ENCODE measurements at regions of chr9 and their contacts with region 1.

Region 1: DNA sequence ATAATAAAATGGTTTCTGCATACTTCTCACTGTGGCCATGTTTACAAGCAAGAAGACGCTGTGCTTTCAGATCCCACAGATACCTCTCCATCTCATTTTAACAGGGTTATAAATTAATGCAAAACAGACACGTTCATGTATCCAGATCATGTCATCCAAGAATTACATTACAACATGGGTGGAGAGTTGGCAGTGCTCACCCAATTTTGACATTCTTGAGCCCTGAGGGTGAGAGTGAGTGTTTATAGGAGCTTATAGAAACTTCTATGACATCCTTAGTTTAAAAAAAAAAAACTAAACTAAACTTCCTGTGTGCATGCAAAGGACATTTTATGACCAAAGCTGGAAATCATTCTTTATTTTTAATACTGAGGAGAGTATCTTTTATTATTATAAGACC is 9.1 kb downstream of the PRKACG start:
- DNase-seq: no peak
- ATAC-seq: no peak

Region 2: DNA sequence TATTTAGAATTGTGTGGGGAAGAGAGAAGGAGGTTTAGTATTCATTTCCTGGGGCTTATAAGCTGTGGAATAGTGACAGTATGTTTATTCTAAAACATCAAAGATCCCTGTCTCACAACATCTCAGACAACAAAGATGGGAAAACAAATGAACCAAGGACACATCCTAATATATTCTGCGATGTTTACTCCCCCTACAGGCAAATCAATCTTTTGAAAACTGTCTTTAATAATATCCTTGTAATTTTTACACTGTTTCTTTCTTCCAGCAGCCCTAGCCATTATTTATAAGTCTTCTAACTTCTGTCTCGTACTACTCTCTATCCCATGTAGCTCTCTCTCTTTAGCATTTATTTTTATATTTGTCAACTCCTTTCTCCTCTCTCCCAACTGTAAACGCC is 430.7 kb before region 1 on chr9:
- intact Hi-C with region 1: loop called (anchors 5 kb)
- DNase-seq: no peak
- ATAC-seq: no peak

Region 3: DNA sequence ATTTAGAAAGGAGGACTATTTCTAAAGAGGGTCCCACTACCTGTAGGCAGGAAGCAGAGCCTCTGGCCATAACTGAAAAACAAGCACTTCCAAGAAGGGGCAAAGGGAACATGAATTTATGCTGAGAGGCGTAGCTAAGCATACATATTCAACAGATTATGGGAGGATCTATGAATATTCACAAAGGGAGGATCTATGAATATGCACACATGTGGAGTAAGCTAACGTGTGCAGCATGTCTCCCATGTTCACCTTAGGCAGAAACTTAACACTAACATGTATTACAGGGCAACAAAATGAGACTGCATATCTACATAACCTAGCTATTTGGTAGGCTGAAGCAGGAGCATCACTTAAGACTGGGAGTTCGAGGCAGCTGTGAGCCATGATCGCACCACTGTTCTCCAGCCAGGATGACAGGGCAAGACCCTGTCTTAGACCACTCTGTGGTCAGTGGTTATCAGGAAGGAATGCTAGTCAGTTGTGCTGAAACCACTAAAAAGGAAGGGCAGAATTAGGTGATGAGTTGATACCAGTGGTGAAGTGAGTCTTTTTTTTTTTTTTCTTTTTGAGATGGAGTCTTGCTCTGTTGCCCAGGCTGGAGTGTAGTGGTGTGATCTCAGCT is 51.5 kb after region 1 on chr9:
- intact Hi-C with region 1: no loop called
- DNase-seq: no peak
- ATAC-seq: no peak

Region 4: DNA sequence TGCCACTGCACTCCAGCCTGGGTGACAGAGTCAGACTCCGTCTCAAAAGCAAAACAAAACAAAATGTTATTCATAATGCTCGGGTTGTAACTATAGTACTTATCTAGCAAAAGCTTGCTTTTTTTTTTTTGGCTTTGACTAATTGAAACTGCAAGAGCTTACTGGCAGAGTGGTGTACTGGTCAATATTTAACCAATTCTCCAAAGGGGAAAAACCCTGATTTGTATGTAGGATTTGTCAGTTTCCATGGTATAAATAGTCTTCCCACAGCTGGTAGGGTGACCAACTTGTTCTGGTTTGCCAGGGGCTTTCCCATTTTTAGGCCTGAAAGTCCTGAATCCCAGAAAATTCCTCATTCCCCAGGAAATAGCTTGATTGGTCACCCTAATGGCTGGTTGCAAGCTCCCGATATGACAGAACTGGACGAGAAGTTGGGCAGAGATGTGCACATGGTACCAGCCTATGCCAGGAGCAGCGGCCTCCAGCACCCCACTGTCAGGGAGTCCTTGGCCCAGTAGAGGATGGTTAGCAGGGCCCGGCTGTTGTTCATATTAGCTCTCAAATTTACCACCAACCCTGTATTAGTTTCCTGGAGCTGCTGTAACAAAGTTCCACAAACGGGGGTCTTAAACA is 88.8 kb after region 1 on chr9:
- intact Hi-C with region 1: no loop called
- DNase-seq: no peak
- ATAC-seq: no peak

Region 5: DNA sequence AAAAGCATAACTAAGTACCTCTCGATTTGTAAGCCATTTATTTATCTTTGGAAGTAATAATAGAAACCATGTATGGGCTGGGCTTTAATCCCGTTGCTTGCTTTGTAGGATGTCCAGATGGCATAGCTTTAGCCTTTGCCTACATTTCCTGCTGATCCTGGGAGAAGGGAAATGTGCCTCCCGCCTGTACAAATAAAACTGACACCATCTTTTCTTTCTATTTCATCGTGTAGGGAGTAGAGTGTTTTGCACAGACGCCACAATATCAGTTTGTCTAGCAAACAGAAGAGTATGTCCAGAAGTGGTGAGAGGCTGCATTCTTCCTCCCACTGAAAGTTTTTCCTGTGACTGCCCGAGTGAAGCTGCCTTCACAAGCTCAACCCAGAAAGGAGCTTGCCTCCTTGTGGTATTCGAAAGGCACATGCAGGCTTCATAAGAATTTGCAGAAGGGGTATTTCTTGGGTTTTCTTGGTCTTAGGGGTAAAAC is 144.5 kb after region 1 on chr9:
- intact Hi-C with region 1: no loop called
- DNase-seq: no peak
- ATAC-seq: peak; percentile 38

Measured in Right ventricle myocardium inferior (tissue), 1 donor.